ENCODE measurements at regions of chr4 and their contacts with region 1.

Region 1: DNA sequence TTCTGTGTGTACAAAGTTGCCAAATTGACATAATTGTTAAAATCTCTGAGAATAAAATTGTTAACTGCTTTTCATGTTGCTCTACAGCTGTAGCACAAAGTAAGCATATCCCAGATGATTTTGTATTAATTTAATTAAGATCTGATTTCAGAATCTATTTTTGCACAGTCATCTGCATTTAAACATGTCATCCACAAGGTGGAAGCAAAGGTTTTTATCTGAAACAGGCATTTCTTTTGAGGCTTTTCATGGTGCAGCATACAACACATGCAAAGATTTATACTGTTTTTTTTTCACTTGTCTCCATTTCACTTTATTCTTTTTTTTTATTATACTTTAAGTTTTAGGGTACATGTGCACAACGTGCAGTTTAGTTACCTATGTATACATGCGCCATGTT is 51.2 kb downstream of the GC start:
- DNase-seq: peak; percentile 13
- ATAC-seq: no peak
- H3K4me3 ChIP-seq: no peak overlapping the region
- H3K27ac ChIP-seq: no peak overlapping the region
- H3K4me1 ChIP-seq: no peaks in the 10 kb centered on the region
- H3K27me3 ChIP-seq: no peaks in the 10 kb centered on the region
- CTCF ChIP-seq: peak; percentile 46
- EP300 ChIP-seq: no peak
- POLR2A ChIP-seq: no peak
- RAD21 ChIP-seq: no peak

Region 2: DNA sequence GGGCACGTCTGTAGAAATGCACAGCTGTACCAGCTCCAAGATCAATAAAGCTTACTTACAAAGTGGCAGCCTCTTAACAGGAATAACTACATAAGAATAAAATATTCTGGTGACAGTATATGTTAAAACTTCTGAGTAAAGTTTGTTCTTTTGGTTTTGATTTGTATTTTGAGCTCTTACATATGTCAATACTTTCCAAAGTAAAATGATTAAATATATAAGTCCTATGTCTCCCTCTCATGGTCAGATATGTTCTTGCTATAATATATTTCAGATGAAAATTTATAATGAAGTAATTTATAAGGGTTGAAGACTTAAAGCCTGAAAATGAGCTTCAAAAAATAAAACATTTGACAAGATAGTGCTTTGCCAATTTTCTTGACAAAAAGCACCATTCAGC is 553.5 kb after region 1 on chr4:
- CTCF ChIA-PET with region 1: no interaction called
- POLR2A ChIA-PET with region 1: no interaction called
- in situ Hi-C with region 1: no loop called
- intact Hi-C with region 1: loop called (anchors 5 kb)
- DNase-seq: no peak
- ATAC-seq: no peak
- H3K4me3 ChIP-seq: no peak overlapping the region
- H3K27ac ChIP-seq: no peak overlapping the region
- H3K4me1 ChIP-seq: no peaks in the 10 kb centered on the region
- H3K27me3 ChIP-seq: no peaks in the 10 kb centered on the region
- CTCF ChIP-seq: no peak
- EP300 ChIP-seq: no peak
- POLR2A ChIP-seq: no peak
- RAD21 ChIP-seq: no peak

Region 3: GRCh38 chr4:72302981-72303704 is 570.4 kb after region 1 on chr4:
- CTCF ChIA-PET with region 1: interaction called, 5 read pairs
- POLR2A ChIA-PET with region 1: no interaction called
- in situ Hi-C with region 1: loop called (anchors 5 kb)
- intact Hi-C with region 1: loop called (anchors 1 kb)
- DNase-seq: peak; percentile 34
- ATAC-seq: peak; percentile 93
- H3K4me3 ChIP-seq: no peak overlapping the region
- H3K27ac ChIP-seq: no peak overlapping the region
- H3K4me1 ChIP-seq: no peaks in the 10 kb centered on the region
- H3K27me3 ChIP-seq: no peaks in the 10 kb centered on the region
- CTCF ChIP-seq: peak; percentile 76
- EP300 ChIP-seq: no peak
- POLR2A ChIP-seq: no peak
- RAD21 ChIP-seq: no peak

Region 4: DNA sequence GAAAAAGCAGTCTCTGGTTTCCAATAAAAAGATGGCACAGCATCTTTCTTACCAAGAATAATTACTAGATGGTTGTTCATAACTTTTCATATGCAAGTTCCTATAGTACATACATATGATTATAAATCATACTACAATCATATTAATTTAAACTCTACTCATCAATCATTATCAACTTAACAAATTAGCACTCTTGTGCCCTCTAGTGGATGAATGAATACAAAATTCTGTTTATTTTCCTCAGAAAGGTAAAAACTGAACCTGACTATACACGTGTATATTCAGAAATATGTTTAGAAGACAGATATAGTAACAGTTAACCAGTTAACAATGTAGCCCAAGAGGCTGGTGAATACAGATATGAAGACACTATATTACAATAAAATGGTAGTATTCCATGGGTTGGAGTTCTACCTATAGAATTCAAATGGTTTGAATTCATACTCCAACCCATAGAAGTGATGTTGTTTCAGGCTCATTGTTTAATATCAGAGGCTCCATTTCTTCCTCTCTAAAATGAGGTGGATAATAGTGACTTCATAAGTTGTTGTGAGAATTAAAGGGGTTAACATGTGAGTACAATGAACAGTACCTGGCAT is 736.3 kb after region 1 on chr4:
- CTCF ChIA-PET with region 1: no interaction called
- POLR2A ChIA-PET with region 1: no interaction called
- in situ Hi-C with region 1: no loop called
- intact Hi-C with region 1: loop called (anchors 5 kb)
- DNase-seq: peak; percentile 17
- ATAC-seq: no peak
- H3K4me3 ChIP-seq: no peak overlapping the region
- H3K27ac ChIP-seq: no peak overlapping the region
- H3K4me1 ChIP-seq: no peaks in the 10 kb centered on the region
- H3K27me3 ChIP-seq: no peaks in the 10 kb centered on the region
- CTCF ChIP-seq: peak; percentile 27
- EP300 ChIP-seq: no peak
- POLR2A ChIP-seq: no peak
- RAD21 ChIP-seq: no peak